MCF 10A (cell line): ENCODE measurements at regions of chr1 and their contacts with region 1.

Region 1: GRCh38 chr1:160291248-160292220 is 6.6 kb upstream of the PEX19 start:
- DNase-seq: peak; percentile 79
- H3K4me3 Mint-ChIP-seq: no peak overlapping the region
- H3K27ac Mint-ChIP-seq: peak overlapping the region; percentile 61
- H3K4me1 Mint-ChIP-seq: no peaks in the 10 kb centered on the region
- H3K27me3 Mint-ChIP-seq: no peaks in the 10 kb centered on the region
- CTCF ChIP-seq: peak; percentile 89

Region 2: DNA sequence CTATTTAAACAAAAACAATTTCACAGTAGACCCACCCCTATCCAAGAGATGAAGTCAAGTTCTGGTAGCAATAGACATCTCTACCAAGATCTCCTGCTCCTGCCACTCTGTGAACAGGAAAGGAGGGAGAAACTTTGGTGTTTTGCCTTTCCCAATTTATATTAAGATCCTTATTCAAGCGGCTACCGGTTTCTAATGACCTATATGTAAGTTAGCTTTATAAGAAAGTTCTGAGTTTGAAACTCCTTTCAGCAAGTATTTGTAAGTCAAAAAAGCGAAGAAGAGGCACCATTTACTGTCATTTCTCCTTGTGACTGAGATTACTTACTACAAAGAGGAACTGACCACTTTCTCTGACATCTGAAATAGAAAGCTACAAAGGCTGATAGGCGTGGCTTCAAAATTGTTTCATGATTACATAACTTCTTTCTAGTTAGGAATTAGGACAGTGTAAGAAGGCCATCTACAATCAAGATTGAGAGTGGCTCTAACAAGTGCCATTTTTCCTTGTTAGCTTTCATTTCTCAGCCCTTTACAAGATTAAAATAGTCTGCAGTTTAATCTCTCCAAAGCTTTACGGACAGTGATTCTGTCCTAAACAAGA is 1460.5 kb before region 1 on chr1 and contains the start of gene MNDA:
- CTCF ChIA-PET with region 1: no interaction called
- POLR2A ChIA-PET with region 1: no interaction called
- intact Hi-C with region 1: no loop called
- DNase-seq: no peak
- H3K4me3 Mint-ChIP-seq: no peak within 1 kb of the TSS
- H3K27ac Mint-ChIP-seq: no peak within 1 kb of the TSS
- H3K4me1 Mint-ChIP-seq: no peaks in the 10 kb centered on the region
- H3K27me3 Mint-ChIP-seq: peaks cover 42% of the 10 kb centered on the region
- CTCF ChIP-seq: no peak
- total RNA-seq, gene MNDA: not detected in 2 replicates

Region 3: GRCh38 chr1:160098852-160099561 is 192.5 kb before region 1 on chr1:
- CTCF ChIA-PET with region 1: interaction called, 192 read pairs
- POLR2A ChIA-PET with region 1: interaction called, 10 read pairs
- intact Hi-C with region 1: loop called (anchors 1 kb)
- DNase-seq: peak; percentile 96
- H3K4me3 Mint-ChIP-seq: peak overlapping the region; percentile 81
- H3K27ac Mint-ChIP-seq: no peak overlapping the region
- H3K4me1 Mint-ChIP-seq: peaks cover 36% of the 10 kb centered on the region
- H3K27me3 Mint-ChIP-seq: no peaks in the 10 kb centered on the region
- CTCF ChIP-seq: no peak

Region 4: GRCh38 chr1:160205242-160206035 is 86.1 kb before region 1 on chr1 and contains the start of gene PEA15:
- CTCF ChIA-PET with region 1: interaction called, 32 read pairs
- POLR2A ChIA-PET with region 1: no interaction called
- intact Hi-C with region 1: no loop called
- DNase-seq: peak; percentile 75
- H3K4me3 Mint-ChIP-seq: peak within 1 kb of the TSS; percentile 82
- H3K27ac Mint-ChIP-seq: peak within 1 kb of the TSS; percentile 17
- H3K4me1 Mint-ChIP-seq: peaks cover 25% of the 10 kb centered on the region
- H3K27me3 Mint-ChIP-seq: no peaks in the 10 kb centered on the region
- CTCF ChIP-seq: no peak
- total RNA-seq, gene PEA15: 183 and 198 TPM in 2 replicates

Region 5: DNA sequence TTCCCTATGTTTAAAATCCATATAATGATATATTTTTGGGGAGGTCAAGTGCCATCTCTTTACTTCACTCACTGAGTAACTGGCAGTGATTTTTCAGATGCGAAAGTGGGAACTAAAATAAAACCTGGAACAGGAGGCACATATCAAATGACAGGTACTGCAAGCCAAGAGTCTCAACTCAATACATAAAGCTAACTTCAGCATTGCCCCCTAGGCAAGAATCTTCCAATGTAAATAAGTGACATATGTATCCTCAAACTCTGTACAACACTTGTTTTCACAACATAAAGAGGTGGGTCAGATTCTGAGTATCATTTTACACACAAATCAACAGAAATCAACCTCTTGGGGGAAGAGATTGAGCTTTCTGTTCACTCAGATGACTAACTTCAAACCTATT is 47.3 kb before region 1 on chr1:
- CTCF ChIA-PET with region 1: interaction called, 76 read pairs
- POLR2A ChIA-PET with region 1: interaction called, 3 read pairs
- intact Hi-C with region 1: no loop called
- DNase-seq: no peak
- H3K4me3 Mint-ChIP-seq: no peak overlapping the region
- H3K27ac Mint-ChIP-seq: no peak overlapping the region
- H3K4me1 Mint-ChIP-seq: peaks cover 7% of the 10 kb centered on the region
- H3K27me3 Mint-ChIP-seq: no peaks in the 10 kb centered on the region
- CTCF ChIP-seq: no peak

Region 6: GRCh38 chr1:160277330-160277729 is 14.2 kb before region 1 on chr1:
- CTCF ChIA-PET with region 1: interaction called, 83 read pairs
- POLR2A ChIA-PET with region 1: interaction called, 5 read pairs
- intact Hi-C with region 1: no loop called
- DNase-seq: no peak
- H3K4me3 Mint-ChIP-seq: no peak overlapping the region
- H3K27ac Mint-ChIP-seq: no peak overlapping the region
- H3K4me1 Mint-ChIP-seq: no peaks in the 10 kb centered on the region
- H3K27me3 Mint-ChIP-seq: no peaks in the 10 kb centered on the region
- CTCF ChIP-seq: no peak

Region 7: DNA sequence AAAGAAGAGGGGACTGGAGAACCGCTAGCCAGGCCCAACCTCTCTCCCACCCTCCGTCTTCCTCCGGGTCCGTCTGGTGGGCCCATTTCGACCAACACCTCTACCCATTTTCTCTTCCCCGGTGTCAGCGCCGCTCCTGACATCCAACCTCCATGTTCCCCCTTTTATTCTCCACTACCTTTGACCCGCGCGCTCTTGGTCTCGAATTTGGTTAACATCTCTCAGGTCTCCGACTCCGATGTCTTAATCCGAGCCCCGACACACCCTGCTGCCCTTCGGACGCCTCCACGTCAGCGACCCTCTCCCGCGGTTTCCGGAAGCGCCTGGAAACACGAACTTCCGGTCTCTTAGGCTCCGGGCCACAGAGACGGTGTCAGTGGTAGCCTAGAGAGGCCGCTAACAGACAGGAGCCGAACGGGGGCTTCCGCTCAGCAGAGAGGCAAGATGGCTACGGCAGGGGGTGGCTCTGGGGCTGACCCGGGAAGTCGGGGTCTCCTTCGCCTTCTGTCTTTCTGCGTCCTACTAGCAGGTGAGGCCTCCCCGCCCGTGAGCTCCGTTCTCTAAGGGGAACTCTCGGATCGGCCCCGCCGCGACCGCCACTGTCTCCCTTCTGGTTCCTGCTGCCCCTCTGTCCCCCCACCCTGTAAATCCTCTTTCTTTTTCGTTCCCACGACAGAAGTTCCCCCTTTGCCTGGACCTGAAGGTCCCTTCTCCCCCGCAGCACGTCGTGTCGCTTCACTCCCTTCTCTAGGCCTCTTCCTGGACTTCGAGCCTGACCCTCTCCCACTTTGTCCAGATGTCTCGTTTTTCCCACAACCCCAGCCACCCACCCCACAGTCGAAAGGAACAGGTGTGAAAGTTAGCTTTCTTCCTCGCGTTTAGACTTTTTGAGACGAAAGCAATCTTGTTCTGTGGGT is 51.7 kb after region 1 on chr1 and contains the starts of genes COPA and NCSTN:
- CTCF ChIA-PET with region 1: interaction called, 23 read pairs
- POLR2A ChIA-PET with region 1: interaction called, 6 read pairs
- intact Hi-C with region 1: no loop called
- DNase-seq: peak; percentile 98
- H3K4me3 Mint-ChIP-seq: peak within 1 kb of the TSS; percentile 87
- H3K27ac Mint-ChIP-seq: peak within 1 kb of the TSS; percentile 99
- H3K4me1 Mint-ChIP-seq: peaks cover 29% of the 10 kb centered on the region
- H3K27me3 Mint-ChIP-seq: no peaks in the 10 kb centered on the region
- CTCF ChIP-seq: no peak
- total RNA-seq, gene COPA: 273 and 353 TPM in 2 replicates
- total RNA-seq, gene NCSTN: 125 and 129 TPM in 2 replicates

Region 8: DNA sequence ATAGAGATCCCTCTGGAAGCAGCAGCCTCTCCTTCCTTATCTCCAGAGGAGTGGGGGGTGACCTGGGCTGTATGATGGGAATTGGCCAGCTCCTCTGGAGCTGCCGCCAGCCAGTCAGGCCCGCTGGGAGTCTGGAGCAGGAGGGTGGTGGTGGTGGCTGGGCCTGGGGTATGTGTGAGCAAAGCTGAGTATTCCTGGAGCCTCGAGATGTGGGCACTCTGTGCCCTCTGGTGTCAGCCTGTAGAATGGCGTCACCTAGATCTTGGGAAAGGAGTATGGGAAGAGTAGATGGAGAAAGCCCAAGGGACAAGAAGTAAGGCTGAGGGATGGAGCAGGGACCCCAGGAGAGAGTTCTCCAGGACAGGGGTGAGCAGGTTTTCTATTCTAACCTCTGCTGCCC is 124.8 kb after region 1 on chr1:
- CTCF ChIA-PET with region 1: interaction called, 52 read pairs
- POLR2A ChIA-PET with region 1: no interaction called
- intact Hi-C with region 1: loop called (anchors 5 kb)
- DNase-seq: peak; percentile 77
- H3K4me3 Mint-ChIP-seq: no peak overlapping the region
- H3K27ac Mint-ChIP-seq: no peak overlapping the region
- H3K4me1 Mint-ChIP-seq: peaks cover 12% of the 10 kb centered on the region
- H3K27me3 Mint-ChIP-seq: peaks cover 11% of the 10 kb centered on the region
- CTCF ChIP-seq: peak; percentile 83

Region 9: GRCh38 chr1:160474392-160475242 is 183.1 kb after region 1 on chr1:
- CTCF ChIA-PET with region 1: no interaction called
- POLR2A ChIA-PET with region 1: no interaction called
- intact Hi-C with region 1: no loop called
- DNase-seq: no peak
- H3K4me3 Mint-ChIP-seq: no peak overlapping the region
- H3K27ac Mint-ChIP-seq: no peak overlapping the region
- H3K4me1 Mint-ChIP-seq: no peaks in the 10 kb centered on the region
- H3K27me3 Mint-ChIP-seq: peaks cover 27% of the 10 kb centered on the region
- CTCF ChIP-seq: no peak